ENCODE measurements at regions of chr7 and their contacts with region 1.

Region 1: DNA sequence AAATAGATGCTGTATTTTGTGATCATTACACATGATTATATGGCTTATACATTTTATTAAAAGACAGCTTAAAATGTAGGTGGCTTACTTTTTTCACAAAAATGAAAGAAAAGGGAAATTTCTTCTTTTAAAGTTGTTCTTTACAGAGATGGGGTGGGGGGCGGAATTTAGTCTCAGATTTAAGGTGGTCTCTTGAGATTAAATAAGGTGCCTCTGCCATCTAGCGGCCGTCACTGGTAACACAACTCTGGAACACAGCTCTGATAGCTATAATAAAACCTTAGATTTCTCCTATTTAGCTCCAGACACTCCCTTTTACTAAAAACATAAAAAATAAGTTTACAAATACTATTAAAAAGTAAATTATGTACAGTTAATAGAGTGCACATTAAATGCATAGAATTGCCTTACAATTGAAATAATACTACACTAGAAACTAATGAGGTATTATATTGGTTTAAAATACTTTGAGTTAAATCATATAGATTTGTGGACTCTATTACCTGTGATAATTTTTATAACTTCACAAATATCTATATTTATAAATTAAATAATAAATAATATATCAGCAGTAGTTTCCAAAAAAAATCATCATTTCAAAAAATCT is 210.9 kb downstream of the DGKB start:
- DNase-seq: no peak
- ATAC-seq: peak; percentile 64
- H3K4me3 Mint-ChIP-seq: no peak overlapping the region
- H3K27ac Mint-ChIP-seq: no peak overlapping the region
- H3K4me1 Mint-ChIP-seq: no peaks in the 10 kb centered on the region
- H3K27me3 Mint-ChIP-seq: no peaks in the 10 kb centered on the region
- CTCF ChIP-seq: peak; percentile 53

Region 2: GRCh38 chr7:13524076-13524475 is 1167.6 kb before region 1 on chr7:
- CTCF ChIA-PET with region 1: no interaction called
- POLR2A ChIA-PET with region 1: no interaction called
- intact Hi-C with region 1: loop called (anchors 2 kb)
- DNase-seq: no peak
- ATAC-seq: no peak
- H3K4me3 Mint-ChIP-seq: no peak overlapping the region
- H3K27ac Mint-ChIP-seq: no peak overlapping the region
- H3K4me1 Mint-ChIP-seq: no peaks in the 10 kb centered on the region
- H3K27me3 Mint-ChIP-seq: no peaks in the 10 kb centered on the region
- CTCF ChIP-seq: no peak

Region 3: DNA sequence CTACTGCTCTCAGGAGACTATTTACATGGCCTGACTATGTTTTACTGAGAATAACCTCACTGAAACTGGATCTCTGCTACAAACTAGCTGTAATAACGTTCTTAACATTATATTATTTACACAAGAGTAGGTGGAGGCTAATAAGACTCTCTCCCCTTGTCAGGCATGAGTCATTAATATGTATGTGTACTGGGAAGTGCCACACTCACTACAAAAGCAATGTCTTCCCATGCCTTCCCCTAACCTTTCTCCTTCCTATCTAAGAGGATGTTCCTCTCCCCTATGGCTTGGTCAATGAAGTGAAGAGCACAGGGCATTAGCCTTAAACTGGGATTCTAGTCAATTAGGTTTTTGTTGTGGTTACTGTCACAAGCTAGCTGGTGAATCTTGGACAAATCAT is 62.9 kb after region 1 on chr7:
- CTCF ChIA-PET with region 1: no interaction called
- POLR2A ChIA-PET with region 1: no interaction called
- intact Hi-C with region 1: loop called (anchors 10 kb)
- DNase-seq: no peak
- ATAC-seq: no peak
- H3K4me3 Mint-ChIP-seq: no peak overlapping the region
- H3K27ac Mint-ChIP-seq: no peak overlapping the region
- H3K4me1 Mint-ChIP-seq: no peaks in the 10 kb centered on the region
- H3K27me3 Mint-ChIP-seq: no peaks in the 10 kb centered on the region
- CTCF ChIP-seq: no peak

Measured in activated B cell treated with CpG ODN at 0.5 μM for 24 hours (primary cell).